SK-N-SH (cell line): ENCODE measurements at regions of chr6 and their contacts with region 1.

Region 1: DNA sequence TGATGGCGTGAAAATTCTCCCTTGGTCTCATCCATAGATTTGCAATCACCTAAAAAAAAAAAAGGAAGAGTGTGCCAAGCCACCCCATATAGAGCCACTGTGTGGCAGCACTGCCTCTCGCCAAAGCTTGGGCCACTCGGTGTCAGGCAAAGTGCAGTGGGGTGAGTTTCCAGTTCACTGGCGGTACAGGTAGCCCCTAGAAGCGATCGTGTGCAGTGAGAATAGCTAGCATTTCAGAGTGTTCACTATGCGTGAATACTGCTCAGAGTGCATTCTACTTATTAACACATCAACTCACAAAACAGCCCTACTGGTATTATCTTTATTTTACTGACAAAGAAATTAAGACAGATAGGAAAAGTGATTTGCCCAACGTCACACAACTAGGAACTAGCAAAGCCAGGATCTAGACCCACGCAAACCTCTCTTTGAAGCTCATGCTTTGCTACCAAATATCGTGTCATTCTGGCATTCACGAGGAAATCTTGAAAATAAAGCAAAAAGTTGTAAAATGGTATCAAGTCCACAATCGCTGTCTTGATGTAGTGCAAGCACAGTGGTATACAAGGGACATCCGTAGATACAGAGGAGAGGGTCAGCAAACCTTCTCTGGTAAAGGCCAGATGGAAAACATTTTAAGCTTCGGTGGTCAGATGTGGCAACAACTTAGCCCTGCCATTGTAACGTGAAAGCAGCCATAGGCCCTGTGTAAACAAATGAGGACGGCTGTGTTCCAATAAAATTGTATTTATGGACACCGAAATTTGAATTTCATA is 10.4 kb upstream of the GCNT2 start:
- DNase-seq: peak; percentile 71
- H3K4me3 ChIP-seq: no peak overlapping the region; a peak in 1 of 4 replicates
- H3K27ac ChIP-seq: no peak overlapping the region
- H3K4me1 ChIP-seq: no peaks in the 10 kb centered on the region; a peak in 1 of 4 replicates
- H3K27me3 ChIP-seq: no peaks in the 10 kb centered on the region
- CTCF ChIP-seq: peak; percentile 72
- EP300 ChIP-seq: no peak
- RAD21 ChIP-seq: peak; percentile 90

Region 2: DNA sequence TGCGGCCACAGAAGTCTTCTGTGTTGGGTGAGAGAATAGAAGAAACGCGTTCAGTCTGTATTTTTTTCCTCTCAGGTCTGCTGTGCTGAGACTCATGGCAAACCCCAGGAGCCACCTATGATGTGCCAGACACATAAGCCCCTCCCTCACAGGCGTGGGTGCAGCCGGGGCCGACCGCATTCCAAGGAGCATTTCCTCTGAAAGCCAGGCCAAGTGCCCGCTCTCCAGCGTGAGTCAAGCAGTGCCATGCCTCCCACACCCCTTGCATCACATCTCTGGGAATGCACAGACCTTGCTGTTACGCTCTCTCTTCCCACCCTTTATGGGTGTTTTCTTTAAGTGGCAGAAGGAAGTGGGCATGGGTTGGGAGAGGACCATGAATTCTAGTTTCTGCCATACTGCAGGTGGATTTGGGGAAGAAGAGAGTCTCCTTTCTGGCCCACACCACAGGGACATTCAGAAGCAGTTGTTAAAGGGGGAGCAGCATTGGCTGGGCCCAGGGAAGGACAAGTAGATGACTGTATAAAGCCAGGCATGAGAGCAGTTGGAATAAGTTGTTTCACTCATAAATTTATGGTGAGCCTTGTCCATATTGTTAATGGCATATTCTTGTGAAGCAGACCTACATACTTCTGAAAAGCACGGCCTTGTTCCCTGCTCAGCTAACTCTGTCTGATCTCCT is 58.8 kb before region 1 on chr6:
- CTCF ChIA-PET with region 1: no interaction called
- POLR2A ChIA-PET with region 1: no interaction called
- DNase-seq: no peak
- H3K4me3 ChIP-seq: no peak overlapping the region
- H3K27ac ChIP-seq: peak overlapping the region in 1 of 2 experiments; percentile 64; a peak in 2 of 4 replicates
- H3K4me1 ChIP-seq: peaks cover 0 to 5% of the 10 kb centered on the region in 2 experiments; a peak in 1 of 4 replicates
- H3K27me3 ChIP-seq: no peaks in the 10 kb centered on the region
- CTCF ChIP-seq: no peak
- EP300 ChIP-seq: 0 out of 4 replicates have a peak, but pooled peaks of 1 of the 2 experiments have one; percentile 16
- RAD21 ChIP-seq: no peak

Region 3: DNA sequence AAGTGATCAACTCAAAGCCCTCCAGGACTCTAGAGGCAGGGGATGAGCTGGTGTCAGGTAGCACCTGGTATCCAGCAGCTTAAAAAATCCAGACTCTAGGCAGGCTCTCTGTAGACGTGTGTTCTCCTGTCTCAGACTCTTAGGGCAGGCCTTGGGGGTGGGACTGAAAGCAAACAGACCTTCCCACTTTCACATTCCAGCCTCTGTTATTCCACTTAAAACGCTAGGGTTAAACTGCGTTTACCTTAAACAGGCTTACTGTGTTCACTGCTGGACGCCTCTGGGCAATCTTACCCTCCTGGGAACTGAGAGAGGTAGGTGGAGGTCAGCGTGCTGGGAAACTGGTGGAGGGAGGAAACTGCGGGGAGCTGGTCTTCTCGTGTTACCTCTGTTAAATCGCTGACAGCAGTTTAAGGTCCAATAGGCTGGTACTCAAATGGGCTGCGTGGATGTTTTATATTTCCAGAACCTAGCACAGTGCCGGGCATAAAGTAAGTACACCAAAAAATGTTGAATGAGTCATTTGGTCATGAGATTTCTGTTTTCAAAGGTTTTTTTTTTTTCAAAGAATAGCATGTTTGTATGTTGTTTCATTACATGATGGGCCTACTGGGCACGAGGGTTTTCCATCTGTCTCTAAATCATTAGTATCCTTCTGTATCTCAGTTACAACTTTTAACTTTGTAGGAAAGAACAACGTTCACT is 10.5 kb after region 1 on chr6 and contains the start of gene GCNT2:
- CTCF ChIA-PET with region 1: interaction called, 25 read pairs
- POLR2A ChIA-PET with region 1: no interaction called
- DNase-seq: no peak
- H3K4me3 ChIP-seq: no peak within 1 kb of the TSS
- H3K27ac ChIP-seq: no peak within 1 kb of the TSS
- H3K4me1 ChIP-seq: peaks cover 0 to 4% of the 10 kb centered on the region in 2 experiments; a peak in 1 of 4 replicates
- H3K27me3 ChIP-seq: no peaks in the 10 kb centered on the region
- CTCF ChIP-seq: no peak
- EP300 ChIP-seq: no peak
- RAD21 ChIP-seq: no peak
- polyA plus RNA-seq, gene GCNT2: 0.13 and 0.29 TPM in 2 replicates

Region 4: GRCh38 chr6:10694302-10695085 is 183.7 kb after region 1 on chr6 and contains the starts of genes C6orf52 and PAK1IP1:
- CTCF ChIA-PET with region 1: interaction called, 12 read pairs
- POLR2A ChIA-PET with region 1: no interaction called
- DNase-seq: peak; percentile 90
- H3K4me3 ChIP-seq: peak within 1 kb of the TSS; percentile 65 to 71
- H3K27ac ChIP-seq: peak within 1 kb of the TSS; percentile 95 to 97
- H3K4me1 ChIP-seq: peaks cover 9 to 11% of the 10 kb centered on the region in 2 experiments; a peak in 3 of 4 replicates
- H3K27me3 ChIP-seq: no peaks in the 10 kb centered on the region
- CTCF ChIP-seq: no peak; the same call in 1 of the 2 replicates
- EP300 ChIP-seq: no peak
- RAD21 ChIP-seq: no peak
- polyA plus RNA-seq, gene C6orf52: 0.71 and 1.4 TPM in 2 replicates
- polyA plus RNA-seq, gene PAK1IP1: 16.2 and 19.1 TPM in 2 replicates